KBM-7 (cell line): ENCODE measurements at regions of chr11 and their contacts with region 1.

Region 1: GRCh38 chr11:47329987-47330931 is 22.2 kb downstream of the MYBPC3 start:
- DNase-seq: no peak

Region 2: DNA sequence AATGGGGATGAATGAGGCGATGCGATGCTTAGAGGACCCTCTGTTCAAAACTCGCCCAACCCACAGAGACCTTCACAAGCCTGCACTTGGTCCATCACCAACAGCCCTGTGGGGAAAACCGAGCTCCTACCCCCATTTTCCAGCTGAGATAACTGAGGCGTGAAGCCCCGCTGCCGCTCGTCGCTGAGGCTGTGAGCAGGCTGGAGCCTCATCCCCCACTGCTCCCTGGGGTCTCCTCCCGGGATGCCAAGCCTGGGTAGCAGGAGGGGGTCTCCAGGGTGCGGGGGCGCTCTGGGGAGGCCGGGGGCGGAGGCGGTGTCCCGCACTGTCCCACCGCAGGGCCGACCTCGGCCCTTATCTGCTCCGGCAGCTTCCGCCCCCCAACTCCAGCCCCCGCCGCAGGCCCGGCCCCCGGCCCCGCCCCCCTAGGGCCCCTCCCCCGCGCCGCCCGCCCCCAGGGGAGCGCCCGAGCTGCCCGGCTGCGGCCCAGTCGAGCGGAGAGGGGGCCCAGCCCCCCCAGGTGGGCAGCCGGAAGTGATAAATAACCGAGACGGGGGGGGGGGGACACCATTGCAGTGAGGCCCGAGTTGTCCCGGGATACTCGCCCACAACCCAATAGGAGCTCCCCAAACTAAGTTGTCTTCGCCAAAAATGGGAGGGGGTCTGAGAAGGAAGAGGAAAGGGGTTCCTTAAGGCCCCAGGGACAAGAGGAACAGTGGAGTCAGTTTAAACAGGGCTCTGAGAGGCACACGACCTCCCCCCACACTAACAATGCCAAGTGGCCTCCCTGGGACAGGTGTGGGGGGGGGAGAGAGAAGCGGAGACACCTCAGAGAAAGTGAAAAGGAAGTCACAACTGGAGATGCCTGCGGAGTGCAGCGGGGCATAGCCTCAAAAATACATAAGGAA is 69.9 kb after region 1 on chr11:
- in situ Hi-C with region 1: loop called (anchors 10 kb)
- DNase-seq: peak; percentile 84